Dendritic cell treated with granulocyte-macrophage colony-stimulating factor and Interleukin-4, amounts not matched to agents 40 ng/mL and 50 ng/mL, for 4 days (primary cell): ENCODE measurements at regions of chr13 and their contacts with region 1.

Region 1: GRCh38 chr13:109145631-109146030 is 516.2 kb downstream of the MYO16 start:
- H3K4me3 Mint-ChIP-seq: no peak overlapping the region
- H3K27ac Mint-ChIP-seq: no peak overlapping the region
- H3K4me1 Mint-ChIP-seq: no peaks in the 10 kb centered on the region
- H3K27me3 Mint-ChIP-seq: peaks cover 25% of the 10 kb centered on the region

Region 2: GRCh38 chr13:109792416-109793059 is 646.9 kb after region 1 on chr13:
- intact Hi-C with region 1: loop called (anchors 2 kb)
- H3K4me3 Mint-ChIP-seq: no peak overlapping the region
- H3K27ac Mint-ChIP-seq: no peak overlapping the region
- H3K4me1 Mint-ChIP-seq: peaks cover 26% of the 10 kb centered on the region
- H3K27me3 Mint-ChIP-seq: peaks cover 13% of the 10 kb centered on the region

Region 3: GRCh38 chr13:109998726-109999533 is 853.3 kb after region 1 on chr13:
- intact Hi-C with region 1: loop called (anchors 10 kb)
- H3K4me3 Mint-ChIP-seq: no peak overlapping the region
- H3K27ac Mint-ChIP-seq: peak overlapping the region; percentile 44
- H3K4me1 Mint-ChIP-seq: peaks cover 14% of the 10 kb centered on the region
- H3K27me3 Mint-ChIP-seq: no peaks in the 10 kb centered on the region